ENCODE measurements at regions of chr12 and their contacts with region 1.

Region 1: DNA sequence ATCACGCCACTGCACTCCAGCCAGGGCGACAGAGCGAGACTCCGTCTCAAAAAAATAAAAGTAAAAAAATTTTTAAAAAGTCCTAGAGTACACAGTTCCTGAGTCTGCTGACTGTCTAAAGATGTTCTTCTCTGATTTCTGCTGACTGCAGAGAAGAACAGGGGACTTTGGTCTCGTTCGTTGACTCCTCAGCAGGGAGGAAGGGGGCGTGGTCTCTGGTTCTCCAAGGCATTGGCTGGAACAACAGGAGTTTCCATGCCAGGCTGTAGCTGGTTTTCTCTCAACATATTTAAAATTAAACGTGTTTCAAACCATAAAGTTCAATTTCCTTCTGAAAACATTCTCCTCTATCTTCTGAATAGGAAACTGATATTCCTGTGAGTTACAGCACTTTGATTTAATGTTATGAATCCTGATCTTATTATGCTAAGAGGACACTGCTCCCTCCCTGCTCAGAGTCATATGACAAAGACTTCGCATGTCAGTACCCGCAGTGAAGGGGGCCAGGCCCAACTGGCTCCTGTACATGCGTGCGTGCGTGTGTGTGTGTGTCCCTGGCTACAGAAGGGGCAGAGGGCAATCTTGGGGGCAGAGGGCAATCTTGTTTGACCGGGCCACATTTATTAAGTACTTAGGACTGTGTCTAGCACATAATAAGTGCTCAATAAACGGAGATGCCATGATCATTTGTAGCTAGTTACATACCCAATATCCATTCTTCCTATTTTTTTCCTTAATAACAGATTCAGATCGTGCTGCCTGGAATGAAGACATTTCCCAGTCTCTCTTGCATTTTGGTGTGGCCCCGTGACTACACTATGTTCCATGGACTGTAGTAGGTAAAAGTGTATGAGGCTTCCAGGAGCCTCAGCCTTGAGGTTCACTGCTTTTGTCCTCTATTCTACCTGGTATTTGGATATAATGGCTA is 16.5 kb upstream of the HNF1A start:
- DNase-seq: no peak
- ATAC-seq: no peak
- H3K4me3 Mint-ChIP-seq: no peak overlapping the region
- H3K27ac Mint-ChIP-seq: peak overlapping the region; percentile 12
- H3K4me1 Mint-ChIP-seq: peaks cover 37% of the 10 kb centered on the region
- H3K27me3 Mint-ChIP-seq: no peaks in the 10 kb centered on the region
- CTCF ChIP-seq: no peak

Region 2: DNA sequence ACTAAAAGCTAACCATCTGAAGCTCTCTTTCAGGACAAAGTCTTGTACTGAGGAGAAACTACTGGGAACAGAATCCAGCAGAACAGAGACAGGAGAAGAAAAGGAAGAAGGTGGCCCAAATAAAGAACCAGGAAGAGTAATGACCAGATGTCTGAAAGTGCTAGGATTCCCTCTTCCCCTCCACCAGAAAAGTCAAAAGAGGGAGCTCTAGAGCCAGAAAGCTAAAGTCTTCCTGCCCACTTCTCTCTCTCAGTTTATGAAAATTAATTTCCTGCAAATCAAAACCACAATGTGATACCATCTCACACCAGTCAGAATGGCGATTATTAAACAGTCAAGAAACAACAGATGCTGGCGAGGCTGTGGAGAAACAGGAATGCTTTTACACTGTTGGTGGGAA is 104.9 kb before region 1 on chr12:
- CTCF ChIA-PET with region 1: interaction called, 3 read pairs
- POLR2A ChIA-PET with region 1: no interaction called
- intact Hi-C with region 1: loop called (anchors 10 kb)
- DNase-seq: no peak
- ATAC-seq: peak; percentile 54
- H3K4me3 Mint-ChIP-seq: no peak overlapping the region
- H3K27ac Mint-ChIP-seq: peak overlapping the region; percentile 15
- H3K4me1 Mint-ChIP-seq: peaks cover 44% of the 10 kb centered on the region
- H3K27me3 Mint-ChIP-seq: no peaks in the 10 kb centered on the region
- CTCF ChIP-seq: peak; percentile 24

Region 3: DNA sequence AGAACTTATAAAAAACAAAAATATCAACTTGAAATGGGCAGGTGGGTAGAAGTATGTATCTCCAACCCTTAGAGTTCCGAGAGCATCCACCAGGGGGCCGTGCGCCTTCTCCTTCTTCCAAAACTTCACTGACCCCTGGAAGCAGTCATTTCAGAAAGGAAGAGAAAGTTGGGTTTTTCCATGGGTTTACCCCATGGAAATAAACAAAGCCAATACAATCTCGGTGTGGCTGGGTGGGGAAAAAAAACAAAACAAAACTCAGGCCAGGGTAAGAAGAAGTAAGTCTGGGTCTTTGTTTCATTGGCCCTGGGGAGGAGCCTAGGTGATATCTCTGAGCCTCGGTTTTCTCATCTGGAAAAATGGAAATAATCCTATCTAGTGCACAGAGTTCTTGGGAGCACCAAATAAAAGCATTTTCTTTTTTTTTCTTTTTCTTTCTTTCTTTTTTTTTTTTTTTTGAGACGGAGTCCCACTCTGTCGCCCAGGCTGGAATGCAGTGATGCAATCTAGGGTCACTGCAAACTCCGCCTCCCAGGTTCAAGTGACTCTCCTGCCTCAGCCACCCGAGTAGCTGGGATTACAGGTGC is 17.1 kb before region 1 on chr12:
- CTCF ChIA-PET with region 1: interaction called, 10 read pairs
- POLR2A ChIA-PET with region 1: interaction called, 3 read pairs
- intact Hi-C with region 1: no loop called
- DNase-seq: peak; percentile 86
- ATAC-seq: peak; percentile 81
- H3K4me3 Mint-ChIP-seq: no peak overlapping the region
- H3K27ac Mint-ChIP-seq: no peak overlapping the region
- H3K4me1 Mint-ChIP-seq: peaks cover 9% of the 10 kb centered on the region
- H3K27me3 Mint-ChIP-seq: no peaks in the 10 kb centered on the region
- CTCF ChIP-seq: peak; percentile 81

Measured in activated CD8-positive, alpha-beta T cell treated with anti-CD3 and anti-CD28 coated beads for 36 hours (primary cell).